PC-9 (cell line): ENCODE measurements at regions of chr17 and their contacts with region 1.

Region 1: DNA sequence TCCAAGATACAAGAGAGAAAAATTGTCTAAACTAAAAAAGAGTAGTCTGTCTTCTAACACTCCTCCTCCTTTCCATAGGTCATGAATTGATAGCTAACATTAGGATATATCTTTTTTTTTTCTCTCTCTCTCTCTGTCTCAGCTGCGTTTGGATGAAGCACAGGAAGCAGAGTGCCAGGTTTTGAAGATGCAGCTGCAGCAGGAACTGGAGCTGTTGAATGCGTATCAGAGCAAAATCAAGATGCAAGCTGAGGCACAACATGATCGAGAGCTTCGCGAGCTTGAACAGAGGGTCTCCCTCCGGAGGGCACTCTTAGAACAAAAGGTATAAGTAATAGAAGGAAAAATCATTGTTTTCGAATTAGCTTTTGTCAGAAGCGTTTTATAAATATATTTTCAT is 32.9 kb downstream of the ABHD15 start:
- DNase-seq: no peak
- H3K4me3 ChIP-seq: no peak overlapping the region
- H3K27ac ChIP-seq: no peak overlapping the region
- H3K4me1 ChIP-seq: no peaks in the 10 kb centered on the region
- H3K27me3 ChIP-seq: no peaks in the 10 kb centered on the region
- CTCF ChIP-seq: no peak

Region 2: DNA sequence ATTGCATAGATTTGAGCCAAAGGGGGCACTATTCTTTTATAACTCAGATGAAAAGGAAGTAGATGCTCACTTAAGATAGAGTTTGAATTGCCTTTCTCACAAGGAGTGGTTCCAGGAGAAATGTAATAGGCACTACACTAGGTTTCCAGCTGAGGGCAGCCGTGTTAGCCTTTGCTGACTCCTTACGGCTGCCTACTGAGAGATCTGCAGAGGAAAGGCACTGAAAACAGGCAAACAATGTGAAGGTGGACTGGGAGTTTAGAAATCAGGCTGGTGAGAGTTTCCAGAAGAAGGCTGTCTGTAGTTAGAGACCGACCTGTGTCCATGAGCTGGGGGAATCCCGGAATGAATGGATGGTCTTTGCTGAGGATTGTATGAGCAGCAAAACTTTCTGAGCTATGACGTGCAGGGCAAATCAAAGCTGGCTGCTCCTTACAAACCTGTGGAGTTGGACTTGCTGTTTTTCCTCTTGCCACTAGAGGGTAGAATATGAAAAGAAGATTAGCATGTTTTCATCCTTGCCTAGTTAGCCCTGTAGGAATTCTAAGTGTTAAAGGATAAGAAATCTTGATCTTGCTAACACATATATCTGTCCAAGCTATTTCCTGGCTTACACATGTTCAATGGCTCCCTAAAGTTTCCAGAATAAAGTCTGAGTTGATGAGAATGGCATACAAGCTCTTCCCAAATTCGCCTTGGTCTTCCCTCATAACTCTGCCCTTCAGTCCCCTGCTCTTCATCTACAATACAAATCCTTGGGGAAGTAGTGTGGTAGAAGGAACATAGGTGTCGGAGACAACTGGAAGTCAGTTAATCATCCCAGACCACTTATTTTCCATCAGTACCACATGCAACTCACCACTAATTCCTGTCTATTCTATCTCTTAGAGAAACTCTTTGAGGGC is 163.9 kb before region 1 on chr17:
- CTCF ChIA-PET with region 1: interaction called, 4 read pairs
- POLR2A ChIA-PET with region 1: no interaction called
- intact Hi-C with region 1: loop called (anchors 1 kb)
- DNase-seq: peak; percentile 61 to 71
- H3K4me3 ChIP-seq: peak overlapping the region; percentile 10; the same call in 1 of the 2 replicates
- H3K27ac ChIP-seq: no peak overlapping the region
- H3K4me1 ChIP-seq: peaks cover 11% of the 10 kb centered on the region
- H3K27me3 ChIP-seq: no peaks in the 10 kb centered on the region
- CTCF ChIP-seq: peak; percentile 89

Region 3: DNA sequence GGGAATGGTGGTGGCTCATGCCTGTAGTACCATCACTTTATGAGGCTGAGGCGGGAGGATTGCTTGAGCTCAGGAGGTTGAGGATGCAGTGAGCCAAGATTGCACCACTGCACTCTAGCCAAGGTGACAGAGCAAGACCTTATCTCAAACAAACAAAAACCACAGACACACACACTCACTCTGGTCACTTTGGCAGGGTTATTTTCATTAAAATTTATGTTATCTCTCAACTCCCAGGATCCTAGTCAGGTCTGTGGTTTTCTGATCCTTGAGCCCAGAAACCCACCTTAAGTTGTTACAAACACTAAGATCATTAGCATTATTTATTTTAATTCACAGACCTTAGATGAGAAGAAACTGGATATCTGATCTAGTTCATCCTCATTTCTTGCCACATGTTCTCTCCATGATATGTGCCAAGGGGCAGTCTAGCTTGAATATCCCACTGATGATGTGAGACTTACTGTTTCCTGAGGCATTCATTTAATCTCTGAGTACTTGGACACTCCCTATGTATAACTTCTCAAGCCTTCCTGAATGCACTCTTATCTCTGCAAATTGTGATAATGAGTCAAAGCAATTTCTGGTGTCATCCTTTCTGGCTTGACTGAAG is 23.2 kb after region 1 on chr17:
- CTCF ChIA-PET with region 1: no interaction called
- POLR2A ChIA-PET with region 1: no interaction called
- intact Hi-C with region 1: no loop called
- DNase-seq: peak in 1 of 2 experiments; percentile 52
- H3K4me3 ChIP-seq: no peak overlapping the region
- H3K27ac ChIP-seq: no peak overlapping the region
- H3K4me1 ChIP-seq: peaks cover 14% of the 10 kb centered on the region
- H3K27me3 ChIP-seq: no peaks in the 10 kb centered on the region
- CTCF ChIP-seq: no peak

Region 4: DNA sequence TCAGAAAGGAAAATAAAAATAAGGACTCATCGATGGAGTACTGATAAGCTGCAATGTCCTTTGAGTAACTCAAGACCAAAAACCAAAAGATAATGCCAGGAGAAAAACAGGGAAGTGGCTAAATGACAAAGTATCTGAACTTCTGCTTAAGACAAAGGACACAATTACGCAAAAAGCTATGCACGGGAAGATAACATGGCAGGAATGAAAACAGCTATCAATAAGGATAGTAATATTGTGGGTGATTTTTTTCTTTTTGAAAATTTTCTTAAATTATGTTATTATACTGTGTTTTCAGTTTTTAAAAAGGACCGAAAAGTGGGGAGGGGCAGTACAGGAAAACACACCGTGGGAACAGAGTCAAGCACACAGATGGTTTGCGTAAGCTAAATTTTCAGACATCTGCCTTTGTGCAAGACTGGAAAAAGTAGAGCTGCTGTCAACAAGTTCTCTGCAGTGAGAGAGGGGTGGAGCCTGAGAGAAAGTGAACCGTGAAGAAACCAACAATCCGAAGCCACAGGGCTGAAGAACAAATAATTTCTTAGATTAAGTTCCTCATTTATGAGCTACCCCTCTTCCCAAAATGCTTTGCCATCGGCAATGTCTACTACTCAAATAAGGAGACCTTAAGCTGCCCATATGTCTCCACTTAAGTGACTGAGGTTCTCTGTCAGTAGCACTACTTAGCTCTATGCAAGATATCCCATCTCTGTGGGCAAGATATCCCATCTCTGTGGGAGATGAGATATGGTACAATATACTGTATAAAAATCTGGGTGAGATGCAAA is 188.6 kb after region 1 on chr17:
- CTCF ChIA-PET with region 1: no interaction called
- POLR2A ChIA-PET with region 1: no interaction called
- intact Hi-C with region 1: no loop called
- DNase-seq: no peak
- H3K4me3 ChIP-seq: no peak overlapping the region
- H3K27ac ChIP-seq: no peak overlapping the region
- H3K4me1 ChIP-seq: peaks cover 16% of the 10 kb centered on the region
- H3K27me3 ChIP-seq: no peaks in the 10 kb centered on the region
- CTCF ChIP-seq: no peak

Region 5: GRCh38 chr17:30357476-30357875 is 823.5 kb after region 1 on chr17:
- CTCF ChIA-PET with region 1: interaction called, 10 read pairs
- POLR2A ChIA-PET with region 1: no interaction called
- intact Hi-C with region 1: no loop called
- DNase-seq: no peak
- H3K4me3 ChIP-seq: no peak overlapping the region
- H3K27ac ChIP-seq: no peak overlapping the region
- H3K4me1 ChIP-seq: peaks cover 6% of the 10 kb centered on the region
- H3K27me3 ChIP-seq: no peaks in the 10 kb centered on the region
- CTCF ChIP-seq: no peak